ENCODE measurements at regions of chr13 and their contacts with region 1.

Region 1: GRCh38 chr13:48595431-48596429 is 58.0 kb upstream of the CYSLTR2 start:
- DNase-seq: peak; percentile 48
- H3K4me3 ChIP-seq: no peak overlapping the region
- H3K27ac ChIP-seq: no peak overlapping the region
- H3K4me1 ChIP-seq: no peaks in the 10 kb centered on the region
- H3K27me3 ChIP-seq: no peaks in the 10 kb centered on the region
- CTCF ChIP-seq: peak; percentile 80
- EP300 ChIP-seq: no peak
- RAD21 ChIP-seq: peak; percentile 91

Region 2: GRCh38 chr13:48545608-48546007 is 50.1 kb before region 1 on chr13:
- CTCF ChIA-PET with region 1: no interaction called
- POLR2A ChIA-PET with region 1: no interaction called
- DNase-seq: no peak
- H3K4me3 ChIP-seq: no peak overlapping the region
- H3K27ac ChIP-seq: no peak overlapping the region
- H3K4me1 ChIP-seq: no peaks in the 10 kb centered on the region
- H3K27me3 ChIP-seq: no peaks in the 10 kb centered on the region
- CTCF ChIP-seq: no peak
- EP300 ChIP-seq: no peak
- RAD21 ChIP-seq: no peak

Region 3: GRCh38 chr13:48571126-48571913 is 24.4 kb before region 1 on chr13:
- CTCF ChIA-PET with region 1: no interaction called
- POLR2A ChIA-PET with region 1: no interaction called
- DNase-seq: no peak
- H3K4me3 ChIP-seq: 0 out of 4 replicates have a peak overlapping the region, but pooled peaks of 1 of the 2 experiments have one; percentile 19
- H3K27ac ChIP-seq: peak overlapping the region; percentile 54 to 80; a peak in 3 of 4 replicates
- H3K4me1 ChIP-seq: no peaks in the 10 kb centered on the region; a peak in 1 of 4 replicates
- H3K27me3 ChIP-seq: no peaks in the 10 kb centered on the region
- CTCF ChIP-seq: no peak
- EP300 ChIP-seq: no peak
- RAD21 ChIP-seq: no peak

Region 4: DNA sequence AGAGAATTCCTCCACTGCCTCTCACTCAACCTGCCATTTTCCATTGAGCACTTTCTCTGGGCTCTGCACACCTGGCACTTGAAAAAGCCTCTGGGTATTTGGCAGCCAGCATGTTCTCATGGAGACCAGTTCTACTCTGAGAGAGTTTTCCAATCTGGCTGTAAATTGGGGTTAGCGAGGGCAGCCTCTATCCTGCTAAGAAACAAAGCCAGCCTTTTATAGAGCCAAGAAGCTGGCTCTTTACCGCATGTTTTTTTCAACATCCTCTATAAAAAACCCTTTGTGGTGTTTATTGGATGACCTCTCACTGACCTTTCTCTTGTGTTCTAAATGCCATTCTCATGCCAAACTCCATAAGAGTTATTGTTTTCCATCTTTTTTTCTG is 10.3 kb before region 1 on chr13:
- CTCF ChIA-PET with region 1: interaction called, 17 read pairs
- POLR2A ChIA-PET with region 1: no interaction called
- DNase-seq: no peak
- H3K4me3 ChIP-seq: no peak overlapping the region
- H3K27ac ChIP-seq: no peak overlapping the region
- H3K4me1 ChIP-seq: peaks cover 4% of the 10 kb centered on the region in 2 experiments; a peak in 2 of 4 replicates
- H3K27me3 ChIP-seq: no peaks in the 10 kb centered on the region
- CTCF ChIP-seq: no peak
- EP300 ChIP-seq: no peak
- RAD21 ChIP-seq: no peak